Activated T-helper 1 cell treated with anti-CD3 and anti-CD28 coated beads, Interleukin-12 subunit alpha, Interleukin-12 subunit beta, Interleukin-2, Interleukin-4 antibody, amounts not matched to agents 30 ng/mL and 10 ng/mL and 1 ng/mL, durations not matched to agents 14 hours and 24 hours and 36 hours (primary cell): ENCODE measurements at regions of chr10 and their contacts with region 1.

Region 1: GRCh38 chr10:130110246-130111112 is at the start of gene C10orf143:
- DNase-seq: peak; percentile 98
- H3K4me3 Mint-ChIP-seq: peak within 1 kb of the TSS; percentile 95
- H3K27ac Mint-ChIP-seq: peak within 1 kb of the TSS; percentile 99
- H3K4me1 Mint-ChIP-seq: peaks cover 60% of the 10 kb centered on the region
- H3K27me3 Mint-ChIP-seq: no peaks in the 10 kb centered on the region
- total RNA-seq, gene C10orf143: 3.3 and 3.6 TPM in 2 replicates

Region 2: DNA sequence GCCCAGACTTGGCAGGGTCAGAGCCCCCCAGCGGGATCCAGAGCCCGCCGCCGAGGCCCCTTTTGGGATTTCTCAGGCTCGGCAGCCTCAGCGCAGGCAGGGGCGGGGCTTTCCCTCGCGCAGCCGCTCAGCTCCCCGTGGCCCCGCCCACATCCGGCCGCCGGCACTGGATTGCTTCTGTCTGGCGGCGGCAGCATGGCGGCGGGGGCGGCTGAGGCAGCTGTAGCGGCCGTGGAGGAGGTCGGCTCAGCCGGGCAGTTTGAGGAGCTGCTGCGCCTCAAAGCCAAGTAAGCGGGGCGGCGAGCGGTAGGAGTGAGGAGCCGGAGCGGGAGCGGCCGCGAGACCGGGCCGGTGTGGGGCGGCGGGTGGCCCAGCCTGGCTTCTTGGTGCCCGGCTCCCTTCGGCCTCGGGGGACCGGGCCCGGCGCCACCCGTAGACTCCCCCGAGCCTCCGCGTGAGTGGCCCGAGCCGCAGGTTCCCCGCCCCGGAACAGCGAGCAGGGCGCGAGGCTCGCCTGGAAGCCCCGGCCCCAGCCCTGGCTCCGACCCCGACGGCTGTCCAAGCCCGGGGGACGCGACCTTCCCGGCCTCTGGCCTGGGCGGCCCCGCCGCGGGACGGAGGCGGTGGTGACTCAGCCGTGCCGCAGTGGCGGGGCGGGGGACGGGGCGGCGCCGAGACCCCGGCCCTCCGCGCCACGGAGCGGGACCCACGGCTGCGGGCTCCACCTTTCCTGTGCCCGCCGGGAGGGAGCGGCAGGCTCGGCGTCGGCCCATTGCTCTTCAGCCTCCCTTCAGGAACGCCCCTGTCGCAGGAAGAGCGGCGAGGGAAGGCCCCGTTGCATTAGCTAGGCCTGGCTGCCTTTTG is 26.0 kb after region 1 on chr10 and contains the start of gene GLRX3:
- intact Hi-C with region 1: loop called (anchors 1 kb)
- DNase-seq: peak; percentile 85
- H3K4me3 Mint-ChIP-seq: peak within 1 kb of the TSS; percentile 90
- H3K27ac Mint-ChIP-seq: peak within 1 kb of the TSS; percentile 84
- H3K4me1 Mint-ChIP-seq: peaks cover 53% of the 10 kb centered on the region
- H3K27me3 Mint-ChIP-seq: peaks cover 13% of the 10 kb centered on the region
- total RNA-seq, gene GLRX3: 119 and 129 TPM in 2 replicates

Region 3: DNA sequence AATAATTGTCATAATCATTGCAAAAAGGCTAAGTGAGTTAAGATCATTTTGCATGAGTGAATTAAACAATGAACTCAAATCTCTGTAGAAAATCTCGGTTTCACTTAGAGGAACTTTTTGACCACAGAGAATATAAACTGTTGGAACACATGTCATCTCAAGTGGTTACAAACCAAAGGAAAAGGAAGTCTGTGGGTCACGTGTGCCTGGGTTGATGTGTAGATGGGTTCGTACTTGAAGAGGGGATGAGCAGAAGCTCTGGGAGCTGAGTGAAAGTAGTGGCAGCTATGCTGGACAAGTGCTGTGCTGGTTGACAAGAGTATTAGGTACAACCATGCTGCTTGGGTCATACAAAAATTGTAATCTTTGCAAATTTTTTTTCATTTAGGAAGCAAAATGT is 60.7 kb after region 1 on chr10:
- intact Hi-C with region 1: loop called (anchors 2 kb)
- DNase-seq: peak; percentile 41
- H3K4me3 Mint-ChIP-seq: no peak overlapping the region
- H3K27ac Mint-ChIP-seq: no peak overlapping the region
- H3K4me1 Mint-ChIP-seq: peaks cover 35% of the 10 kb centered on the region
- H3K27me3 Mint-ChIP-seq: peaks cover 1% of the 10 kb centered on the region

Region 4: DNA sequence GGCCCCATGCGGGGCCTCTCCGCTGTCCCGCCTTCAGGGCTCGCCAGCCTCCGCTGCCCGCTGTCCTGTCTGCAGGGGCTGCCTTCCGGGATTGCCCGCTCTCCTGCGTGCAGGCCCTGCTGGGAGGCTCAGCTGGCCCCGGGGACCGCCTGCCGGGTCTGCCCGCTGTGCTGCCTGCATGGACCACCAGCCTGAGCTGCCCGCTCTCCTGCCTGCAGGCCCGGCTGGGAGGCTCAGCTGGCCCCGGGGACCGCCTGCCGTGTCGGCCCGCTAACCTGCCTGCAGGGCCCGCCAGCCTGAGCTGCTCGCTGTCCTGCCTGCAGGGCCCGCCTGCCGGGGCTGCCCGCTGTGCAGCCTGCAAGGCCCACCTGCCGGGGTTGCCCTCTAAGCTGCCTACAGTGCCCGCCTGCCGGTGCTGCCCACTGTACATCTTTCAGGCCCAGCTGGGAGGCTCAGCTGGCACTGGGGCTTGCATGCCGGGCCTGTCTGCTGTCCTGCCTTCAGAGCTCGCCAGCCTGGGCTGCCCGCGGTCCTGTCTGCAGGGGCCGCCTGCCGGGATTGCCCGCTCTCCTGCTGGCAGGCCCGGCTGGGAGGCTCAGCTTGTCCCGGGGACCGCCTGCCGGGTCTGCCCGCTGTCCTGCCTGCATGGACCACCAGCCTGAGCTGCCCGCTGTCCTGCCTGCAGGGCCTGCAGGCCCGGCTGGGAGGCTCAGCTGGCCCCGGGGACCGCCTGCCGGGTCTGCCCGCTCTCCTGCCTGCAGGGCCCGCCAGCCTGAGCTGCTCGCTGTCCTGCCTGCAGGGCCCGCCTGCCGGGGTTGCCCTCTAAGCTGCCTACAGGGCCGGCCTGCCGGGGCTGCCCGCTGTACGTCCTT is 190.8 kb after region 1 on chr10:
- intact Hi-C with region 1: loop called (anchors 10 kb)
- DNase-seq: peak; percentile 38
- H3K4me3 Mint-ChIP-seq: peak overlapping the region; percentile 82
- H3K27ac Mint-ChIP-seq: no peak overlapping the region
- H3K4me1 Mint-ChIP-seq: peaks cover 8% of the 10 kb centered on the region
- H3K27me3 Mint-ChIP-seq: no peaks in the 10 kb centered on the region